ENCODE measurements at regions of chr2 and their contacts with region 1.

Region 1: DNA sequence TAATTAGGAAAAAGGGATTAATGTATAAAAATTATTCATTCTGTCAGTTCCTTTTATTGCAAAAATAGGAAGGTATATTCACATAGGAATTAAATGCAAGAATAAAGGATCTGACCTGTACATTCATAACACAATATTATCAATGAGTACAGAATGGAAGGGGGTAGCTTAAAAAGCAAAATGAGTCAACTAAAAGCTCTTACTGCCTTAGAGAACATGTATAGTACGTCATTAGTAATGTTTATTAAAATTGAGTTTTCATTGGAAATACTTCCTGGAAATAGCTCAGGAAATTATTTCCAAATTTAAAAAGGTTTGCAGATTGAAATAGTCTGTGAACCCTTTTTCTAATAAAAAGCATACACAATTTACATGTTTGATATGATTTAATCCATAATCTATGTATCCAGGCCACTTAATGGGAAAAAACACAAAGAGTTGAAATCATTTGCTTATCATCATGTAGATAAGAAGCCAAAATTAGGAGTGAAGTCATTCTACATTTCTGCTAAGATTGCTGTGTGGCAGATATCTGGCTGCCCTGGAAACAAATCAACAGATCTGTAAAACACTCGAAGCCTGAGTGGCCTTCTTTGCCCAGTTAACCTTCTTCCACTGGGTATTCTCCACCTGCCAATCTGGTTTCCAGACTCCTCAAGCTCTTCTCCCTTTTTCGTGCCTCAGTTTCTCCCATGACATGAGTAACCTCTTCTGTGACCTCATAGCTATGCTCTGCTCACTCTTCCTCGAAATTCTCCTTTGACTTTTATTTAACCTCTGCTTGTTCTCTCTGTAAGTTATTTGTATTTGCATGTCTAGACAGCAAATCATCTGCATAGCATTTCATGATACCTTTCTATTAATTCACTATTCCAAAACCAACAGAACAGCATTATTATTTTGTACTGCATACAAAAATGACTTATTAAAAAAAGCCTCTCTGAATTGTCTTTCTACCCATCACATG is 181.2 kb upstream of the REV1 start:
- DNase-seq: no peak
- H3K4me3 ChIP-seq: peak overlapping the region; percentile 27
- H3K27ac ChIP-seq: peak overlapping the region; percentile 79
- H3K4me1 ChIP-seq: peaks cover 40% of the 10 kb centered on the region
- CTCF ChIP-seq: no peak

Region 2: GRCh38 chr2:99697811-99698568 is 26.9 kb after region 1 on chr2:
- CTCF ChIA-PET with region 1: no interaction called
- POLR2A ChIA-PET with region 1: interaction called, 10 read pairs
- intact Hi-C with region 1: no loop called
- DNase-seq: no peak
- H3K4me3 ChIP-seq: no peak overlapping the region
- H3K27ac ChIP-seq: no peak overlapping the region
- H3K4me1 ChIP-seq: peaks cover 21% of the 10 kb centered on the region
- CTCF ChIP-seq: no peak

Region 3: GRCh38 chr2:101252408-101253012 is 1581.5 kb after region 1 on chr2 and contains the start of gene CNOT11:
- CTCF ChIA-PET with region 1: no interaction called
- POLR2A ChIA-PET with region 1: no interaction called
- intact Hi-C with region 1: no loop called
- DNase-seq: peak; percentile 99
- H3K4me3 ChIP-seq: peak within 1 kb of the TSS; percentile 96
- H3K27ac ChIP-seq: peak within 1 kb of the TSS; percentile 77
- H3K4me1 ChIP-seq: peaks cover 39% of the 10 kb centered on the region
- CTCF ChIP-seq: no peak
- total RNA-seq, gene CNOT11: 45.7 and 55.5 TPM in 2 replicates

Measured in OCI-LY7 (cell line).